Activated CD8-positive, alpha-beta T cell treated with anti-CD3 and anti-CD28 coated beads, Interleukin-2, amount 10 ng/mL, durations not matched to agents 7 days and 5 days (primary cell): ENCODE measurements at regions of chr1 and their contacts with region 1.

Region 1: GRCh38 chr1:44631647-44632539 is 42.4 kb downstream of the TMEM53 start:
- DNase-seq: peak; percentile 94
- ATAC-seq: peak; percentile 86
- H3K4me3 Mint-ChIP-seq: peak overlapping the region; percentile 88
- H3K27ac Mint-ChIP-seq: peak overlapping the region; percentile 97
- H3K4me1 Mint-ChIP-seq: peaks cover 27% of the 10 kb centered on the region
- H3K27me3 Mint-ChIP-seq: no peaks in the 10 kb centered on the region

Region 2: GRCh38 chr1:44531785-44532566 is 99.9 kb before region 1 on chr1:
- CTCF ChIA-PET with region 1: no interaction called
- POLR2A ChIA-PET with region 1: no interaction called
- DNase-seq: no peak
- ATAC-seq: no peak
- H3K4me3 Mint-ChIP-seq: no peak overlapping the region
- H3K27ac Mint-ChIP-seq: no peak overlapping the region
- H3K4me1 Mint-ChIP-seq: no peaks in the 10 kb centered on the region
- H3K27me3 Mint-ChIP-seq: peaks cover 14% of the 10 kb centered on the region

Region 3: DNA sequence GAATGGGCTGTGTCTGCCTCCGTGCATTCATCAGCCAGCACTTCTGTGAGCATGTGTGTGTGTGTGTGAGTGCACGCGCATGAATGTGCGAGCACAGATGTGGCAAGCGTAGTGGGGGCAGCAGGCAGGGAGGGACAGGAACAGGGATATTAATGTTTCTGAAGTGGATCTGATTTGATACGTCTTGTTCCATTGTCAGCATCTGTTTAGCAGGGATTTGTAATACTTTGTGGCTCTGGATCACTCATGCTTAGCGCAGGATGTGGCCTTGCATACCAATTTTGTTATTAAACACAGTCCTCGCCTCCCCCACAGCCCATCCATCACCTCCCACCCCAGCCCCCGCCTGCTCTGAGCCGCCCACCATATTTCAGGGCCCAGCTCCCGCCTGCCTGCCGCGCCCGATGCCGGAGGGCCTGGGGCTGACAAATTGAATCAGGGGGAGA is 10.0 kb before region 1 on chr1:
- CTCF ChIA-PET with region 1: interaction called, 3 read pairs
- POLR2A ChIA-PET with region 1: interaction called, 17 read pairs
- DNase-seq: no peak
- ATAC-seq: no peak
- H3K4me3 Mint-ChIP-seq: no peak overlapping the region
- H3K27ac Mint-ChIP-seq: no peak overlapping the region
- H3K4me1 Mint-ChIP-seq: no peaks in the 10 kb centered on the region
- H3K27me3 Mint-ChIP-seq: no peaks in the 10 kb centered on the region

Region 4: GRCh38 chr1:44646261-44647110 is 14.6 kb after region 1 on chr1:
- CTCF ChIA-PET with region 1: interaction called, 59 read pairs
- POLR2A ChIA-PET with region 1: interaction called, 31 read pairs
- DNase-seq: no peak
- ATAC-seq: no peak
- H3K4me3 Mint-ChIP-seq: no peak overlapping the region
- H3K27ac Mint-ChIP-seq: no peak overlapping the region
- H3K4me1 Mint-ChIP-seq: no peaks in the 10 kb centered on the region
- H3K27me3 Mint-ChIP-seq: no peaks in the 10 kb centered on the region

Region 5: DNA sequence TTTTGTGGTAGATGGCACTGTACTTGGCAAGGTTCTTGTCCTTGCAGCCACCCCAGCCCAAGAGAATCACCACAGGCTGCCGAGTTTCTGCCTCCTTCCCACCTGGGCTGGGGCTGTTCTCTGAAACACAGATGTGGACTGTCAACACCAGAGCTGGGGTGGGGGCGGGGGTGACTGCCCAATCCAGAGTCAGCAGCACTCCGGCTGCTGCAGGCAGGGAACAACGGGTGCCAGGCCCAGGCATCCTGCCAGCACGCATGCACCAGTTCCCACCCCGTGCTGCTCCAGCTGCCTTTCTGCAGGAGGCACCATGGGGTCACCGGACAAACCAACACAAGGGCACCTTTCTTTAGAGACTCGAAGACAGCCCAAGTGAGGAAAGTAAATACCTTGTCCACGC is 28.3 kb after region 1 on chr1:
- CTCF ChIA-PET with region 1: interaction called, 4 read pairs
- POLR2A ChIA-PET with region 1: interaction called, 10 read pairs
- DNase-seq: no peak
- ATAC-seq: no peak
- H3K4me3 Mint-ChIP-seq: no peak overlapping the region
- H3K27ac Mint-ChIP-seq: no peak overlapping the region
- H3K4me1 Mint-ChIP-seq: peaks cover 9% of the 10 kb centered on the region
- H3K27me3 Mint-ChIP-seq: no peaks in the 10 kb centered on the region

Region 6: GRCh38 chr1:44674113-44675000 is 42.5 kb after region 1 on chr1 and contains the starts of genes ARMH1 and TMEM53:
- CTCF ChIA-PET with region 1: interaction called, 5 read pairs
- POLR2A ChIA-PET with region 1: interaction called, 20 read pairs
- DNase-seq: peak; percentile 99
- ATAC-seq: peak; percentile 97
- H3K4me3 Mint-ChIP-seq: peak within 1 kb of the TSS; percentile 83
- H3K27ac Mint-ChIP-seq: peak within 1 kb of the TSS; percentile 87
- H3K4me1 Mint-ChIP-seq: peaks cover 28% of the 10 kb centered on the region
- H3K27me3 Mint-ChIP-seq: no peaks in the 10 kb centered on the region
- total RNA-seq, gene ARMH1: 80.0 to 88.4 TPM
- total RNA-seq, gene TMEM53: 4.0 to 4.6 TPM